Right ventricle myocardium inferior (tissue), 1 donor: ENCODE measurements at regions of chr5 and their contacts with region 1.

Region 1: GRCh38 chr5:69166686-69167492 is at the start of gene CCNB1:
- DNase-seq: peak; percentile 98
- ATAC-seq: peak; percentile 100
- total RNA-seq, gene CCNB1: 3.5 TPM

Region 2: GRCh38 chr5:69189162-69190086 is 22.5 kb after region 1 on chr5 and contains the start of gene CENPH:
- intact Hi-C with region 1: loop called (anchors 2 kb)
- DNase-seq: peak; percentile 92
- ATAC-seq: peak; percentile 99
- total RNA-seq, gene CENPH: 3.6 TPM

Region 3: GRCh38 chr5:69234457-69235268 is 67.8 kb after region 1 on chr5 and contains the start of gene CDK7:
- intact Hi-C with region 1: loop called (anchors 5 kb)
- DNase-seq: peak; percentile 96
- ATAC-seq: peak; percentile 100
- total RNA-seq, gene CDK7: 10.5 TPM

Region 4: GRCh38 chr5:69312459-69313160 is 145.7 kb after region 1 on chr5:
- intact Hi-C with region 1: no loop called
- DNase-seq: no peak
- ATAC-seq: no peak